Calu3 (cell line): ENCODE measurements at regions of chr14 and their contacts with region 1.

Region 1: GRCh38 chr14:56300495-56300894 is 182.3 kb downstream of the PELI2 start:
- DNase-seq: no peak
- H3K4me3 Mint-ChIP-seq: no peak overlapping the region
- H3K27ac Mint-ChIP-seq: no peak overlapping the region
- H3K4me1 Mint-ChIP-seq: no peaks in the 10 kb centered on the region
- H3K27me3 Mint-ChIP-seq: no peaks in the 10 kb centered on the region
- CTCF ChIP-seq: no peak

Region 2: GRCh38 chr14:56125772-56126636 is 174.5 kb before region 1 on chr14:
- CTCF ChIA-PET with region 1: no interaction called
- intact Hi-C with region 1: no loop called
- DNase-seq: no peak
- H3K4me3 Mint-ChIP-seq: no peak overlapping the region
- H3K27ac Mint-ChIP-seq: no peak overlapping the region
- H3K4me1 Mint-ChIP-seq: peaks cover 42% of the 10 kb centered on the region
- H3K27me3 Mint-ChIP-seq: no peaks in the 10 kb centered on the region
- CTCF ChIP-seq: no peak

Region 3: DNA sequence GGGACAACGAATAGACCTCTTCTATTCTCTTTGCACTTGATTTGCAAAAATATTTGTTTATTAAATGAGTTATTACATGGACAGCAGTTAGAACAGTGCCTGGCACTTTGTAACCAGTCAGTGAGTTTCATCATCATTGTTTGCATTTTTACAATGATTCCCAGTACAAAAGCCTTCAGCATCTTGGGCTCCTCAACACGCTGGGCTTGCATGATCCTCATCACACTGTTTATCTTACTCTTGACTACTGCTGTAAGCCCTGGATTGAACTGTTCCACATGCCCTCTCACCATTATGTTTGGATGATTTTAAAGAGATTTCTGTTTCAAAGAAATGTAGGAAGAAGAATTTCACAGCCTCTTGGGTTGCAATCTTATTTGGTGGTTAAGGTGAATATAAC is 22.0 kb after region 1 on chr14:
- CTCF ChIA-PET with region 1: no interaction called
- intact Hi-C with region 1: no loop called
- DNase-seq: no peak
- H3K4me3 Mint-ChIP-seq: no peak overlapping the region
- H3K27ac Mint-ChIP-seq: no peak overlapping the region
- H3K4me1 Mint-ChIP-seq: no peaks in the 10 kb centered on the region
- H3K27me3 Mint-ChIP-seq: no peaks in the 10 kb centered on the region
- CTCF ChIP-seq: no peak

Region 4: DNA sequence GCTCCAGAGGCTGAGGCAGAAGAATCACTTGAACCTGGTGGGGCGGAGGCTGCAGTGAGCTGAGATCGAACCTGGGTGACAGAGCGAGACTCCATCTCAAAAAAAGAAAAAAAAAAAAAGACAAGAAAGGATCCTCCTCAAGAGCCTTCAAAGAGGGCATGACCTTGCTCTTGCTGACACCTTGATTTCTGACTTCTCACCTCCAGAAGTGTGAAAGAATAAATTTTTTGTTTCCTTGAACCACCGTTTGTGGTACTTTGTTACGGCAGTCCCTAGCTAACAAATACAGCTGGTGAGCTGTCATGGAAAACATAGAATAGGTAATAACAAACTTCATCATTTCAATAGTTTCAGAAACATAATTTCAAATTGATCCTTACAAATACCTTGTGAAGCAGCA is 1897.6 kb after region 1 on chr14:
- CTCF ChIA-PET with region 1: interaction called, 10 read pairs
- intact Hi-C with region 1: no loop called
- DNase-seq: no peak
- H3K4me3 Mint-ChIP-seq: no peak overlapping the region
- H3K27ac Mint-ChIP-seq: no peak overlapping the region
- H3K4me1 Mint-ChIP-seq: peaks cover 7% of the 10 kb centered on the region
- H3K27me3 Mint-ChIP-seq: peaks cover 15% of the 10 kb centered on the region
- CTCF ChIP-seq: no peak